MCF 10A (cell line): ENCODE measurements at regions of chr12 and their contacts with region 1.

Region 1: DNA sequence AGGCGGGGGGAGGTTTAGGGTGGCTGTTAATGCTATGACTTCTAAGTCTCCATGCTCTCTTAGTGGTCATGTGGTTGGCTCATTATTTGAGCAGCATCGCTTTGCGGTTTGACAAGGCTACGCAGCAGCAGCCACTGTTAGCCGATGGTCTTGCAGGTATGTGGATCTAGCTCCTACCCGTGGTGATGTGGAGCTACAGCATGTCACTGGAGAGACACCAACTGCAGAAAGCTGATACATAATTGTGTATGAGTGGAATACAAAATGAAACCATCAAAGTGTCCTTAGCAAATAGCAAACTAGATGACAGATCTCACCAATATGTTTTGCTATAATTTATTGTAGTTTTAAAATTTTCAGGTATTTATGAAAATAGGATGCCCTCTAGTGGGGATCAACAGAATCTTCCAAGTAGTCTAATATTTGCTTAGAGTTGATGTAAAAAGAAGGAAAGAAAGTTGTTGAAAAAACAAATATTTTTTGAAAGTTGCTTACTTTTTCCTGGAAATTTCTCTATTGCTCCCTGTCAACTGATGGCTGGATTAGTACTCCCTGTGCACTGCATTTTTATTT is 94.9 kb downstream of the NAV3 start:
- DNase-seq: peak; percentile 88
- H3K4me3 Mint-ChIP-seq: no peak overlapping the region
- H3K27ac Mint-ChIP-seq: peak overlapping the region; percentile 12
- H3K4me1 Mint-ChIP-seq: no peaks in the 10 kb centered on the region
- H3K27me3 Mint-ChIP-seq: no peaks in the 10 kb centered on the region
- CTCF ChIP-seq: peak; percentile 98

Region 2: GRCh38 chr12:77049767-77050353 is 875.8 kb before region 1 on chr12:
- CTCF ChIA-PET with region 1: interaction called, 14 read pairs
- POLR2A ChIA-PET with region 1: no interaction called
- intact Hi-C with region 1: loop called (anchors 10 kb)
- DNase-seq: peak; percentile 78
- H3K4me3 Mint-ChIP-seq: no peak overlapping the region
- H3K27ac Mint-ChIP-seq: peak overlapping the region; percentile 53
- H3K4me1 Mint-ChIP-seq: no peaks in the 10 kb centered on the region
- H3K27me3 Mint-ChIP-seq: no peaks in the 10 kb centered on the region
- CTCF ChIP-seq: peak; percentile 68

Region 3: GRCh38 chr12:77615331-77615730 is 310.3 kb before region 1 on chr12:
- CTCF ChIA-PET with region 1: interaction called, 4 read pairs
- POLR2A ChIA-PET with region 1: no interaction called
- intact Hi-C with region 1: loop called (anchors 1 kb)
- DNase-seq: peak; percentile 49
- H3K4me3 Mint-ChIP-seq: no peak overlapping the region
- H3K27ac Mint-ChIP-seq: no peak overlapping the region
- H3K4me1 Mint-ChIP-seq: peaks cover 5% of the 10 kb centered on the region
- H3K27me3 Mint-ChIP-seq: no peaks in the 10 kb centered on the region
- CTCF ChIP-seq: peak; percentile 48

Region 4: GRCh38 chr12:77734214-77734883 is 191.3 kb before region 1 on chr12:
- CTCF ChIA-PET with region 1: interaction called, 10 read pairs
- POLR2A ChIA-PET with region 1: no interaction called
- intact Hi-C with region 1: no loop called
- DNase-seq: peak; percentile 49
- H3K4me3 Mint-ChIP-seq: no peak overlapping the region
- H3K27ac Mint-ChIP-seq: no peak overlapping the region
- H3K4me1 Mint-ChIP-seq: peaks cover 6% of the 10 kb centered on the region
- H3K27me3 Mint-ChIP-seq: no peaks in the 10 kb centered on the region
- CTCF ChIP-seq: no peak

Region 5: GRCh38 chr12:77914081-77914488 is 11.5 kb before region 1 on chr12:
- CTCF ChIA-PET with region 1: interaction called, 24 read pairs
- POLR2A ChIA-PET with region 1: interaction called, 3 read pairs
- intact Hi-C with region 1: no loop called
- DNase-seq: no peak
- H3K4me3 Mint-ChIP-seq: no peak overlapping the region
- H3K27ac Mint-ChIP-seq: no peak overlapping the region
- H3K4me1 Mint-ChIP-seq: no peaks in the 10 kb centered on the region
- H3K27me3 Mint-ChIP-seq: no peaks in the 10 kb centered on the region
- CTCF ChIP-seq: no peak

Region 6: DNA sequence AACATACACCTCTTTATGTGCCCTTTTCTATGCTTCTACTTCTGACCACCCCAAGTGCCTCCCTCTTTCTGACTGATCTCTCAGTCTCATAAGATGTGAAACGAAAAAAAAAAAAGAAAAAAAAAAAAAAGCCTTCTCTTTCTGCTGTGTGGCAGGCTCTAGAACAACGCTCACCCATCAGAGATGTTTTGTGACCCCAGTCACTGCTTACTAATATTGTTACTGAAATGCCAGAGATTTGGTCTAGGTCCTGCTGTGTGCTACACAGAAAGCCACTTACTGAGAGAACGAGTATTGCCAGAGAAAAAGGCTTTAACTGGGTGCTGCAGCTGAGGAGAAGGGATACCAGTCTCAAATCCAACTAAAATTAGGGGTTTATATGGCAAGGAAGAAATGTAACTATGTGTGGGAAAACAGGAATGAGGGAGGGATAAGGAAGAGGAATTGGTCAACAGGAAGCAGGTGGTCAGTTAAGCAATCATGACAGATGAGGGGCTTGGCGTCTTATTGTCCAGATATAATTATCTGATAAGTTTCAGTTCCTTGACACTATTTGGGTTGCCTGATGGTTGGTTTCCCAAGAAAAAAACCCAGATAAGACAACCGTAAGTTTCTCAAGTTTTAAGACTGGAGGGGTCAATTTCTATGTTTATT is 54.1 kb after region 1 on chr12:
- CTCF ChIA-PET with region 1: no interaction called
- POLR2A ChIA-PET with region 1: no interaction called
- intact Hi-C with region 1: no loop called
- DNase-seq: no peak
- H3K4me3 Mint-ChIP-seq: no peak overlapping the region
- H3K27ac Mint-ChIP-seq: no peak overlapping the region
- H3K4me1 Mint-ChIP-seq: no peaks in the 10 kb centered on the region
- H3K27me3 Mint-ChIP-seq: no peaks in the 10 kb centered on the region
- CTCF ChIP-seq: no peak

Region 7: GRCh38 chr12:78101946-78102635 is 176.5 kb after region 1 on chr12:
- CTCF ChIA-PET with region 1: no interaction called
- POLR2A ChIA-PET with region 1: no interaction called
- intact Hi-C with region 1: no loop called
- DNase-seq: peak; percentile 20
- H3K4me3 Mint-ChIP-seq: no peak overlapping the region
- H3K27ac Mint-ChIP-seq: no peak overlapping the region
- H3K4me1 Mint-ChIP-seq: no peaks in the 10 kb centered on the region
- H3K27me3 Mint-ChIP-seq: no peaks in the 10 kb centered on the region
- CTCF ChIP-seq: no peak

Region 8: DNA sequence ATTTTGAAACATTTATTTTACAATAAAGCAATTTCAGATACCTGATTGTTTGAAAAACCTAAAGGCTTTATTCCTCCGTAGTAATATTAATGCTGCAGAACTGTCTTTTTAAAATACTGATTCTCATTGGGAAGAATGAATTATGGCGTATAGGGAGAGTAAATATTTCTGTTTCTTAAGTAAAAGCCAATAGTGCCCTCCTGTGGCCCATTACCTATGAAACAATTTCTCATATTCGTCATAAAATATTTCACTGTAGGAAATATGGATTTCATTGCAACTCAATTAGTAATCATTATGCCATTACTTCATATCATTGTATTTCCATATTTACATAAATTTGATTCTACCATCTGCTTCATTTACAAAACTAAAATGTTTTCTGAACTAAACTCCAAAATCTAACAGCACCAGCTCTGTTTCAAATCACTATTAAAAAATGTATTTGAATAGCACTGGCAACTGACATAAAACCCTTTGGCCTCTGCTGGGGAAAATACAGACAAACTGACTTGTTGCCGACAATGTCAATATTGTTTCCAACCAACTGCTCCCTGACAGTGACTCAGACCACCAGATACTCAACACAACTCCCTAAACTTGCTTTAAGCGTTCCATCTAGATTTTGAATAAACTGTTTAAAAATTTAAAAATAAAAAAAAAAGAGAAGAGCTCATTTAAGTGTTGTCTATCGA is 195.4 kb after region 1 on chr12:
- CTCF ChIA-PET with region 1: no interaction called
- POLR2A ChIA-PET with region 1: no interaction called
- intact Hi-C with region 1: loop called (anchors 5 kb)
- DNase-seq: peak; percentile 51
- H3K4me3 Mint-ChIP-seq: no peak overlapping the region
- H3K27ac Mint-ChIP-seq: no peak overlapping the region
- H3K4me1 Mint-ChIP-seq: no peaks in the 10 kb centered on the region
- H3K27me3 Mint-ChIP-seq: no peaks in the 10 kb centered on the region
- CTCF ChIP-seq: peak; percentile 47

Region 9: GRCh38 chr12:78455991-78456390 is 530.4 kb after region 1 on chr12:
- CTCF ChIA-PET with region 1: no interaction called
- POLR2A ChIA-PET with region 1: no interaction called
- intact Hi-C with region 1: no loop called
- DNase-seq: no peak
- H3K4me3 Mint-ChIP-seq: no peak overlapping the region
- H3K27ac Mint-ChIP-seq: no peak overlapping the region
- H3K4me1 Mint-ChIP-seq: peaks cover 9% of the 10 kb centered on the region
- H3K27me3 Mint-ChIP-seq: no peaks in the 10 kb centered on the region
- CTCF ChIP-seq: no peak